PC-9 (cell line): ENCODE measurements at regions of chr2 and their contacts with region 1.

Region 1: GRCh38 chr2:69933839-69934613 is 19.1 kb downstream of the MXD1 start:
- DNase-seq: peak; percentile 30 to 79
- H3K4me3 ChIP-seq: no peak overlapping the region; the same call in 1 of the 2 replicates
- H3K27ac ChIP-seq: peak overlapping the region; percentile 93
- H3K4me1 ChIP-seq: peaks cover 35% of the 10 kb centered on the region
- H3K27me3 ChIP-seq: no peaks in the 10 kb centered on the region
- CTCF ChIP-seq: no peak

Region 2: GRCh38 chr2:69997015-69997830 is 63.2 kb after region 1 on chr2:
- CTCF ChIA-PET with region 1: no interaction called
- POLR2A ChIA-PET with region 1: no interaction called
- intact Hi-C with region 1: loop called (anchors 5 kb)
- DNase-seq: peak; percentile 82 to 93
- H3K4me3 ChIP-seq: no peak overlapping the region; the same call in 1 of the 2 replicates
- H3K27ac ChIP-seq: peak overlapping the region; percentile 87
- H3K4me1 ChIP-seq: peaks cover 53% of the 10 kb centered on the region
- H3K27me3 ChIP-seq: no peaks in the 10 kb centered on the region
- CTCF ChIP-seq: no peak